A549 (cell line): ENCODE measurements at regions of chr14 and their contacts with region 1.

Region 1: GRCh38 chr14:39114073-39114838 is at the start of gene GEMIN2:
- DNase-seq: peak; percentile 96 to 97
- ATAC-seq: peak; percentile 98
- H3K4me3 ChIP-seq: peak within 1 kb of the TSS; percentile 69
- H3K27ac ChIP-seq: peak within 1 kb of the TSS; percentile 83 to 85
- H3K4me1 ChIP-seq: peaks cover 13% of the 10 kb centered on the region; the same call in 2 of the 3 replicates
- CTCF ChIP-seq: no peak
- EP300 ChIP-seq: no peak
- POLR2A ChIP-seq: peak; percentile 94
- RAD21 ChIP-seq: no peak
- polyA plus RNA-seq, gene GEMIN2: 48.1 and 67.8 TPM in 2 replicates

Region 2: DNA sequence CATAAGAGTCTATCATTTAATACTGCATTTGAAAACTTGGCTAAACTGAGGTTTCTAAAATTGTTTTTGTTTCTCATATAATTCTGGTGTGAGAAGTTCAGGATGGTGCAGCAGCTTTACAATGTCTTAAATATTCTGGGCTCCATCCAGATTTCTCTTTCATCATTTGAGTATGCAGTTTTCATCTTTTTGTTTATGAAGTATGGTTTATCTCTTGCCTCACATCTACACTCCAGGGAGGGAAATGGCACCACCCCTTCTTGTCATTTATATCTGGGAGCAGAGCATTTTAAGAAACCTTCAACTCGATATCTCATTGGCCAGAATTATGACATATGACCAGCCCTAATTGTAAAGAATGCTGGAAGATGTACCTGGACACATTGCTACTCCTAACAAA is 24.2 kb after region 1 on chr14:
- CTCF ChIA-PET with region 1: no interaction called
- POLR2A ChIA-PET with region 1: no interaction called
- DNase-seq: no peak
- ATAC-seq: no peak
- H3K4me3 ChIP-seq: no peak overlapping the region
- H3K27ac ChIP-seq: no peak overlapping the region
- H3K4me1 ChIP-seq: no peaks in the 10 kb centered on the region
- CTCF ChIP-seq: no peak
- EP300 ChIP-seq: no peak
- POLR2A ChIP-seq: no peak
- RAD21 ChIP-seq: no peak

Region 3: GRCh38 chr14:39174560-39175444 is 60.5 kb after region 1 on chr14 and contains the start of gene PNN:
- CTCF ChIA-PET with region 1: no interaction called
- POLR2A ChIA-PET with region 1: interaction called, 26 read pairs
- DNase-seq: peak; percentile 96 to 100
- ATAC-seq: peak; percentile 95
- H3K4me3 ChIP-seq: peak within 1 kb of the TSS; percentile 82
- H3K27ac ChIP-seq: peak within 1 kb of the TSS; percentile 95
- H3K4me1 ChIP-seq: peaks cover 36% of the 10 kb centered on the region
- CTCF ChIP-seq: no peak
- EP300 ChIP-seq: no peak
- POLR2A ChIP-seq: peak; percentile 65
- RAD21 ChIP-seq: no peak
- polyA plus RNA-seq, gene PNN: 40.3 and 50.1 TPM in 2 replicates

Region 4: DNA sequence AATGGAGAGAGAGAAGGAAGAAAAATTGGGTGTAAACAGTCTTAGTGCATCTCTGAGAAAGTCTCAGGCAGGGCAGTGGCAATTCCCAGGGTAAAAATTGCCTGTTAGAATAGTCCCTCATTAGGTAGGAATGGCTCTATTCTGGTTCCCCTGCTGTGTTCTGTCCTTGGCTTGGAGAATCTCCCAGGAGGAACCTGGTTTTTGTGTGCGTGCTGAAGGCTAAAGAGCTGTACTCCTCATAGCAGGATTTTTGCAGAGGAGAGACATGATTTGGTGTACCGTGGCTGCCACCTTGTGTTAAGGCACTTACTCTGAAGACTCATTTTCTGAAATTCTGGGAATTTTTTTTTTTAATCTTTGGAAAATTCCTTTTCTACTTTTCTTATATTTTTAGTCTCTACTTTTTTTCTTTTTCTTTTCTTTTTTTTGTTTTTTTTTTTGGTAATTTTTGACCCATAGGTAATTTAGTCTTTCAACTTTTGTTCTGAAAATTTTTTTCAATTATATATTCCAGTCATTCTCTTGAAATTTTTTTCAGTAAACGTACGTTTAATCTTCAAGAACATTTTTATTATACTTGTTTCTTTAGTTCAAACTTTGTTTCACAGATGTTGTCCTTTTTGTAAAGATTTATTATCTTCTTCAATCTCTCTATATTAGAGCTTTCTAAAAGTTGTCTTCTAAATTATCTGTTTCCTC is 254.2 kb after region 1 on chr14:
- CTCF ChIA-PET with region 1: interaction called, 10 read pairs
- POLR2A ChIA-PET with region 1: no interaction called
- DNase-seq: peak; percentile 47 to 77
- ATAC-seq: peak; percentile 80 to 87
- H3K4me3 ChIP-seq: no peak overlapping the region
- H3K27ac ChIP-seq: no peak overlapping the region
- H3K4me1 ChIP-seq: no peaks in the 10 kb centered on the region
- CTCF ChIP-seq: peak; percentile 81
- EP300 ChIP-seq: no peak
- POLR2A ChIP-seq: no peak
- RAD21 ChIP-seq: peak; percentile 84 to 88